ENCODE measurements at regions of chr11 and their contacts with region 1.

Region 1: DNA sequence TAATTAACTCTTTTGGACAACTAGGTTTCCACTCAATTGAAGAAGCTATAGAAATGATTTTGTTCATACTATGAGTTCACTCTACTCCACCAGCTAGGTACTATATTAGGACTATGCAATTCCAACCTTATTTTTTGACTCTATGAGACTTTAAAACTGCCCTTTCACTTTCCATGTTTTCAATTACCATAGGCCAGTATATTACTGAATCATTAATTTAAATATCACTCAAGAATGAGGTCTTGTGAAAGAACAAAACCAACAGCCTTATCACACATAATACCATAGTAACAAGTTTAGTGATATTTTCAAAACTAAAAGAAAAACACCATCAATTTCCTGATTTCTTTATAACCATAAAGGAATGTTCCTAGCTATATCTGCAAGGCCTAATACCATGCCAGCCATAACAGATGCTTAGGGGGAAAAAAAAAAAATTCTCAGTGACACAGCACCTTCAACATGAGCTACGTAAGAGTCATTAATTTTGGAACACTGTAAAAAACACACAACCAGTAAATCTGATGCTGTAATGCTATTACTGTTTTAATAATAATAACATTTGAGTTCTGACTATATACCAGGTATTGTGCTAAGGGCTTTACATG is 6.1 kb downstream of the DCUN1D5 start:
- DNase-seq: no peak
- ATAC-seq: no peak
- H3K4me3 ChIP-seq: no peak overlapping the region
- H3K4me3 Mint-ChIP-seq: no peak overlapping the region
- H3K27ac ChIP-seq: no peak overlapping the region
- H3K27ac Mint-ChIP-seq: no peak overlapping the region
- H3K4me1 ChIP-seq: peaks cover 14% of the 10 kb centered on the region
- H3K4me1 Mint-ChIP-seq: peaks cover 34% of the 10 kb centered on the region
- H3K27me3 ChIP-seq: no peaks in the 10 kb centered on the region
- H3K27me3 Mint-ChIP-seq: no peaks in the 10 kb centered on the region
- CTCF ChIP-seq: no peak

Region 2: GRCh38 chr11:103069367-103069766 is 16.5 kb before region 1 on chr11:
- CTCF ChIA-PET with region 1: no interaction called
- POLR2A ChIA-PET with region 1: no interaction called
- intact Hi-C with region 1: loop called in 1 of 2 experiments (anchors 2 kb)
- DNase-seq: peak in 1 of 9 experiments; percentile 5
- ATAC-seq: no peak
- H3K4me3 ChIP-seq: no peak overlapping the region
- H3K4me3 Mint-ChIP-seq: no peak overlapping the region
- H3K27ac ChIP-seq: peak overlapping the region in 1 of 2 experiments; percentile 53
- H3K27ac Mint-ChIP-seq: peak overlapping the region; percentile 69
- H3K4me1 ChIP-seq: peaks cover 16% of the 10 kb centered on the region
- H3K4me1 Mint-ChIP-seq: peaks cover 51% of the 10 kb centered on the region
- H3K27me3 ChIP-seq: no peaks in the 10 kb centered on the region
- H3K27me3 Mint-ChIP-seq: no peaks in the 10 kb centered on the region
- CTCF ChIP-seq: no peak